ENCODE measurements at regions of chr10 and their contacts with region 1.

Region 1: DNA sequence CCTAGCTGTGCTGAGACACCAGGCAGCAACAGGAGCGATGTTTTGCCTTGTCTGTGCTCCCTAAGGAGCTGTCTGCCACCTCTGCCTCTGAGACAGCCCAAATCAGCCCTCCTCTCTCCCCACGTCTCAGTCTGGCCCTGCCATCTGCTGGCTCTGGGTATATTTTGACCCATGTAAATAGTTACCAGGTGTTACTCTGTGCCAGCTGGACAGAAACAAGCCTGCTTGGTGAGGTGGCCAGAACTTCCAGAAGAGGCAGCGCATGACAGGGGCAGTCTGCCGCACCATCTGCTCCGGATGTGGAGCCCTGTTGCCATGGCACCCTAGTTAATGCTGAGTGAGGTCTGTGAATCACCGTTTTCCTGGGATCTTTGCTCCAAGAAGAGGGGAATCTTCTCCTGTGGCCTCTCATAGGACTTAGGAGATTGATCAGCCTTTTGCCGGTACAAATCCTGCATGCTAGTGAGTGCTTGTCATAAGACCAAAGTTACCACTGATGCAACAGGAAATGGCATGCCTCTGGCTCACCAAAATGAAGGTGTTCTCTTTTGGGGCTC is 31.8 kb downstream of the GSTO2 start:
- DNase-seq: peak; percentile 79 to 96
- H3K4me3 ChIP-seq: peak overlapping the region; percentile 16 to 40
- H3K27ac ChIP-seq: peak overlapping the region; percentile 95 to 96
- H3K4me1 ChIP-seq: peaks cover 6 to 27% of the 10 kb centered on the region in 2 donors
- H3K27me3 ChIP-seq: no peaks in the 10 kb centered on the region
- CTCF ChIP-seq: peak in 1 of 3 experiments; percentile 24

Region 2: DNA sequence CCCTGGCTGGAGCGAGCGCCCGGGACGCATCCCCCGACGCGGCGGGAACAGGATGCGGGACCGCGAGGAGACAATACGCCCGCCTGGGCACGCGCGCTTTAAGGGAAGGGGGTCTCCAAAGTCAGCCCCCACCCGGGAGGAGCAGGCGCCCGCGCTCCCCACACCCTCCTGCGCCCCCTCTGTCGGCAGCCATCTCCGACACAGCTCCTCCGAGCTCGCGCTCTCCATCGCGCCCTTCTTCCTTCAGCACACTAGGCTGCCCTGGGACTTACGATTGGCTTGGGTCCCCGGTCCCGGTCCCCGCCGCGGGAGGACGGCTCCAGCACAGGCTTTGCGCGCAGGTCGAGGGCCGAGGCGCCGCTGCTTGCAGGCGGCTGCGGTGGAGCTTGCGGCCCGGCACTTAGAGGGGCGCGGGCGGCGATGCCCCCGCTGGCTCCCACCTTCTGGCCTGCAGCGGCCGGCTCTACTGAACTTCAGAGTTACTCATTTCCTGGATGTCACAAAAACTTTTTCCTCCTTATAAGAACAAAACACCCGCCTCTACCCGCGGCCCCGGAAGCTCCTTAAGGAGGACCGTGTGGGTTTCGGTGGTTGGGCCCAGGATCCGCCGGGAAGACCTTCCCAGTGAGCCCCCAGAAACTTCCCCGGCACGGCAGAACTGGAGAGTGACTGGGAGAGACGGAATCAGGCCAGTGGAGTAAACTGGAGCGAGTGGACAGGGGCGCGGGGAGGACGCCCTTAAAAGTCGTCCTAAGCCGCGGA is 37.3 kb after region 1 on chr10 and contains the start of gene ITPRIP:
- intact Hi-C with region 1: loop called (anchors 2 kb)
- DNase-seq: peak; percentile 54 to 89
- H3K4me3 ChIP-seq: peak within 1 kb of the TSS; percentile 63 to 86
- H3K27ac ChIP-seq: peak within 1 kb of the TSS; percentile 92 to 98
- H3K4me1 ChIP-seq: peaks cover 6 to 44% of the 10 kb centered on the region in 2 donors
- H3K27me3 ChIP-seq: no peaks in the 10 kb centered on the region
- CTCF ChIP-seq: peak; percentile 7 to 17 (median 12)
- total RNA-seq, gene ITPRIP: 51.0 TPM